H1 (cell line): ENCODE measurements at regions of chr20 and their contacts with region 1.

Region 1: DNA sequence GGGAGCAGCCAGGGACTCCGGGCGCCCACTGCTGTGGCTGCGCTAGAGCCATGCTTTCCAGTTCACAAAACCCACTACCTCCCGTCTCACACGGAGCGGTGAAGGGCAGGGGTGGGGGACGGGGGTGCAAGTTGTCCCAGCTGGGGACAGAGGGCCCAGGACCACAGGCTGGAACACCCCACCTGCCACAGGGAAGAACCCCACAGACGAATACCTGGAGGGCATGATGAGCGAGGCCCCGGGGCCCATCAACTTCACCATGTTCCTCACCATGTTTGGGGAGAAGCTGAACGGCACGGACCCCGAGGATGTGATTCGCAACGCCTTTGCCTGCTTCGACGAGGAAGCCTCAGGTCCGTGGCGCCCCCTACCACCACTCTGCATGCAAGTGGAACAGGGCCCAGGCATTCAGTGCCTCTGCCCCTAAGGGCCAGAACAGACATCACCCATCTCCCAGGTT is 6.6 kb downstream of the MYL9 start:
- DNase-seq: peak in 1 of 2 experiments; percentile 85
- H3K4me3 ChIP-seq: no peak overlapping the region
- H3K27ac ChIP-seq: no peak overlapping the region
- H3K4me1 ChIP-seq: peaks cover 0 to 5% (median 2%) of the 10 kb centered on the region in 4 experiments; a peak in 5 of 7 replicates
- H3K27me3 ChIP-seq: no peaks in the 10 kb centered on the region
- CTCF ChIP-seq: peak; percentile 81 to 87 (median 84)
- EP300 ChIP-seq: no peak
- POLR2A ChIP-seq: no peak
- RAD21 ChIP-seq: peak; percentile 69 to 75

Region 2: DNA sequence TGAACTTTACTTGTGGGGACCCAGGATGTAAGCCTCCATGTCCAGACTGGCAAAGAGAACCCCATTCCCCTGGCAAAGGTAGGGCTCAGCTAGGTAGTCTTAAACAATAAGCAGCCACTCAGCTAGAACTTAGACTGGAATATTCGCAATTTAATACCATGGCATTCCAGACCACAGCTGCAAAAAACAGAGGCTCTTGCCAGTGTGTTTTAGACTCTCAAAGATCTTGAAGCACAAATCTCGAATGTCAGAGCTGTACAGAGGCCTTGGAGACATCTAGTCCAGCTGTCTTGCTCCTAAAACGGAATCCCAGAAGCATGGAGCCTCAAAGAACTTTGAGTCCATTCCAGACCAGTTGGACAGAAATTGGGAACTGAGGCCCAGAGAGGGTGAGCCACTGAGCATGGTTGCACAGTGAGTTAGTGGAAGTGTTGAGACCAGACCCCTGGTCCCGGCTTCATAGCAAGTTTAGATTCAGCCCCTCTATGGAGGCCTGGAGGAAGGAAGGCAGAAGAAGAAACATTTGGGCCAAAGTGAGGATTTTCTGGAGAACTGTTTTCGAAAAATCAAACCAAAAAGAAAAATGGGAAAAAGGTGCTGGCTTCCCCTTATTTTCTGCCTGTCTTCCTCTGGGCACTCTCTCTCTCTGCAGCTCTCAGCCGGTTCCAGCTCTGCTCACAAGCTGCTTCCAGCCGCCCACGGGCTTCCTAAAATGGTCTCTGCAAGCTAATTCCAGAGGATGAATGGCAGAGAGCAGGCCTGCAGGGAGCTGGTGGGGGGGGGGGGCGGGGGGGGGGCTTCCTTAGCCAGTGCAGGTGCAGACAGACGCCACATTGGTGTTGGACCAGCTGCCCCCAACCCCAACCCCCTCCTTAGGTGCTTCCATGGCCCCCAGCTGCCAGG is 279.2 kb before region 1 on chr20:
- CTCF ChIA-PET with region 1: no interaction called
- POLR2A ChIA-PET with region 1: no interaction called
- DNase-seq: no peak
- H3K4me3 ChIP-seq: no peak overlapping the region
- H3K27ac ChIP-seq: no peak overlapping the region
- H3K4me1 ChIP-seq: peaks cover 0 to 2% (median 0%) of the 10 kb centered on the region in 4 experiments; a peak in 3 of 7 replicates
- H3K27me3 ChIP-seq: no peaks in the 10 kb centered on the region
- CTCF ChIP-seq: no peak
- EP300 ChIP-seq: no peak
- POLR2A ChIP-seq: no peak
- RAD21 ChIP-seq: no peak

Region 3: DNA sequence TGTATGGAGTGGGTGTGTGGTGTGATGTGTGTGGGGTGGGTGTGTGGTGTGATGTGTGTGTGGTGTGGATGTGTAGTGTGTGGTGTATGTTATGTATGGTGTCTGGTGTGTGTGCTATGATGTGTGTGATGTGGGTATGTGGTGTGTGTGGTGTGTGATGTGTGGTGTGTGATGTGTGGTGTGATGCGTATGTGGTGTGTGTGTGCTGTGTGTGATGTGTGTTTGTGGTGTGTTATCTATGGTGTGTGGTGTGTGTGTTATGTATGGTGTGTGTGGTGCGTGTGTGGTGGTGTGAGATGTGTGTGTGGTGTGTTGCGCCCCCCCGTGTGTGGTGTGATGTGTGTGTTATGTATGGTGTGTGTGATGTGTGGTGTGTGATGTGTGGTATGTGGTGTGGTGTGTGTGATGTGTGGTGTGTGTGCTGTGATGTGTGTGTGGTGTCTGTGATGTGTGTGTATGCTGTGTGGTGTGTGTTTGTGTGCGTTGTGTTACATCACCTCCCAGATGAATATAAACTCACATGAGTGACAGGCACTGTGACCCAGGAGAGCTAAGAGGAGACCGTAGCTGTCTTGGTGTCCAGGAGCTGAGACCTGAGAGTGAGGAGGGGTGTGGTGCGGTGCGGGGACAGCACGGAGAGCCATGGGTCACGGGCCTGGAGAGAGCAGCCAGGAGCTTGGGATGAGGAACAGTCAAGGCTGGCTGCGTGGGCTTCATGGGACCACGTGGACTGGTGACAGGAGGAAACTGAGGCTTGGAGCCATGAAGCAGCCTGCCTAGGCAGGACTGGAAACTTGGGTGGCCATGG is 232.9 kb before region 1 on chr20:
- CTCF ChIA-PET with region 1: no interaction called
- POLR2A ChIA-PET with region 1: no interaction called
- DNase-seq: peak in 1 of 2 experiments; percentile 43
- H3K4me3 ChIP-seq: no peak overlapping the region
- H3K27ac ChIP-seq: no peak overlapping the region
- H3K4me1 ChIP-seq: peaks cover 0 to 5% (median 2%) of the 10 kb centered on the region in 4 experiments; a peak in 3 of 7 replicates
- H3K27me3 ChIP-seq: no peaks in the 10 kb centered on the region; a peak in 1 of 7 replicates
- CTCF ChIP-seq: no peak
- EP300 ChIP-seq: no peak
- POLR2A ChIP-seq: no peak
- RAD21 ChIP-seq: no peak

Region 4: DNA sequence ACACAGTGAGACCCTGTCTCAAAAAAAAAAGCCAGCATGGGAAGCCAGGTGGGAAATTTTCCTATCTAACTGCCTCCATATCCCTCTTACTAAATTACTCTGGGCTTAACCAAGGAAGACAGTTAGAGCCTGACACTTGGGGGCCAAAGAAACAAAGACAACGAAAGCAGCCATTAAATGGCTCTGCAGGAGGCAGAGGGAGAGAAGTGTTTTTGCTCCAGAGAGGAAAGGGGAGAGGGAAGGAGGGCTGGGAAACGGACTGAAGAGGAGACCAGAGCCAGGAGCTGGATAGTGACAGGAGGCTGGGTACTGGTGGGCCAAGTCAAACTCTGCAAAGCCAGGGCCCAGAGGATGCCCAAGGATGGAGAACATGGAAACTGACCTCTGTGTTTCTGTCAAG is 14.9 kb after region 1 on chr20:
- CTCF ChIA-PET with region 1: interaction called, 13 read pairs
- POLR2A ChIA-PET with region 1: interaction called, 5 read pairs
- DNase-seq: no peak
- H3K4me3 ChIP-seq: no peak overlapping the region; a peak in 2 of 8 replicates
- H3K27ac ChIP-seq: no peak overlapping the region
- H3K4me1 ChIP-seq: peaks cover 6 to 9% (median 8%) of the 10 kb centered on the region in 4 experiments
- H3K27me3 ChIP-seq: no peaks in the 10 kb centered on the region
- CTCF ChIP-seq: no peak
- EP300 ChIP-seq: no peak
- POLR2A ChIP-seq: no peak
- RAD21 ChIP-seq: no peak

Region 5: GRCh38 chr20:36591854-36592641 is 44.2 kb after region 1 on chr20:
- CTCF ChIA-PET with region 1: interaction called, 11 read pairs
- POLR2A ChIA-PET with region 1: interaction called, 4 read pairs
- DNase-seq: no peak
- H3K4me3 ChIP-seq: no peak overlapping the region
- H3K27ac ChIP-seq: no peak overlapping the region
- H3K4me1 ChIP-seq: peaks cover 0 to 8% (median 2%) of the 10 kb centered on the region in 4 experiments; a peak in 5 of 7 replicates
- H3K27me3 ChIP-seq: no peaks in the 10 kb centered on the region
- CTCF ChIP-seq: peak; percentile 49 to 65 (median 58)
- EP300 ChIP-seq: no peak
- POLR2A ChIP-seq: no peak
- RAD21 ChIP-seq: peak; percentile 51 to 65